CD14-positive monocyte (primary cell): ENCODE measurements at regions of chr7 and their contacts with region 1.

Region 1: DNA sequence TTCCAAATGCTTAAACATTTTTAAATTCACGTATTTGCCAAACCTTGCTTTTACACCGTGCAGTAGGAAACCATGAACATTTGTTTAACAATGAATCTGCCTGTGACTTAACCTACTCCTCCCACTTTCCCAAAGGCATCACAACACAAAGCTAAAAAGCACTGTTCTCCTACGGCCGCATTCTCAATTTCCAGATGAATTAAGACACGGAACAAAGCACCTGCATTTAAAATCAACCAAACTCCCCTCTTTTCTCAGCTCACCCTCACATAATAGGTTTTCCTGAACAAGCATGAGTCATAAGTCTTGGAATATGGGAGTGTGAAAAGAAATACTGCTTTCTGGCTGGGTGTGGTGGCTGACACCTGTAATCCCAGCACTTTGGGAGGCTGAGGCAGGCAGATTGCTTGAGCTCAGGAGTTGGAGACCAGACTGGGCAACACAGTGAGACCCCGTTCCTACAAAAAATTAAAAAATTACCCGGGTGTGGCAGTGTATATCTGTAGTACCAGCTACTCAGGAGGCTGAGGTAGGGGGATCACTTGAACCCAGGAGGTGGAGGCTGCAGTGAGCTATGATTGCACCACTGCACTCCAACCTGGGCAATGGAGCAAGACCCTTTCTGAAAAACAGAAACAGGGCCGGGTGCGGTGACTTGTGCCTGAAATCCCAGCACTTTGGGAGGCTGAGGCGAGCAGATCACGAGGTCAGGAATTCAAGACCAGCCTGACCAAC is 51.7 kb upstream of the CYTH3 start:
- DNase-seq: no peak
- H3K4me3 ChIP-seq: no peak overlapping the region
- H3K4me3 Mint-ChIP-seq: no peak overlapping the region
- H3K27ac ChIP-seq: no peak overlapping the region
- H3K27ac Mint-ChIP-seq: no peak overlapping the region
- H3K4me1 ChIP-seq: peaks cover 0 to 8% of the 10 kb centered on the region in 2 donors
- H3K4me1 Mint-ChIP-seq: peaks cover 15% of the 10 kb centered on the region
- H3K27me3 ChIP-seq: no peaks in the 10 kb centered on the region
- H3K27me3 Mint-ChIP-seq: peaks cover 0 to 5% (median 2%) of the 10 kb centered on the region in 3 donors
- CTCF ChIP-seq: no peak

Region 2: DNA sequence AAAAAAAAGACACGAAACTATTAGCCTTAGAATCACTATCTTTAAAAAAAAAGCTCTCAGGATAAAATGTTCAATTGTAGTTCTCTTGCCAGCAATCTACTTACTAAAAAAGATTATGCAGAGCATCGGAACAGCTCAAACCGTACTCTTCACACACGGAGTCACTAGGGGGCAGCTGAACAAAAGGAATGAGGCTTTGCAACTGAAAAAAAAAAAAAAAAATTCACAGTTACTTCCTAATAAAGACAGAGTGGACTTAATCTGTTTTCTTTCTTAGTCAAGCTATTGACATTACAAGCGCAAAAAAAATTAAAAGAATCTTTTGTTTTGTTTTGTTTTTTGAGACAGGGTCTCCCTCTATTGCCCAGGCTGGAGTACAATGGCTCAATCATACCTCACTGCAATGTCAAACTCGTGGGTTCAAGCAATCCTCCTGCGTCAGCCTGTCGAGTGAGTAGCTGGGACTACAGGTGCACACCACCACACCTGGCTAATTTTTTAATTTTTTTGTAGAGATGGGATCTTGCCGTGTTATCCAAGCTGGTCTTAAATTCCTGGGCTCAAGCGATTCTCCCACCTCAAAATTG is 326.8 kb before region 1 on chr7:
- intact Hi-C with region 1: loop called (anchors 5 to 10 kb)
- DNase-seq: peak; percentile 42 to 56 (median 54)
- H3K4me3 ChIP-seq: no peak overlapping the region
- H3K4me3 Mint-ChIP-seq: no peak overlapping the region
- H3K27ac ChIP-seq: no peak overlapping the region
- H3K27ac Mint-ChIP-seq: peak overlapping the region in 2 of 7 donors; percentile 20 to 35
- H3K4me1 ChIP-seq: no peaks in the 10 kb centered on the region
- H3K4me1 Mint-ChIP-seq: no peaks in the 10 kb centered on the region
- H3K27me3 ChIP-seq: no peaks in the 10 kb centered on the region
- H3K27me3 Mint-ChIP-seq: no peaks in the 10 kb centered on the region
- CTCF ChIP-seq: peak; percentile 70

Region 3: DNA sequence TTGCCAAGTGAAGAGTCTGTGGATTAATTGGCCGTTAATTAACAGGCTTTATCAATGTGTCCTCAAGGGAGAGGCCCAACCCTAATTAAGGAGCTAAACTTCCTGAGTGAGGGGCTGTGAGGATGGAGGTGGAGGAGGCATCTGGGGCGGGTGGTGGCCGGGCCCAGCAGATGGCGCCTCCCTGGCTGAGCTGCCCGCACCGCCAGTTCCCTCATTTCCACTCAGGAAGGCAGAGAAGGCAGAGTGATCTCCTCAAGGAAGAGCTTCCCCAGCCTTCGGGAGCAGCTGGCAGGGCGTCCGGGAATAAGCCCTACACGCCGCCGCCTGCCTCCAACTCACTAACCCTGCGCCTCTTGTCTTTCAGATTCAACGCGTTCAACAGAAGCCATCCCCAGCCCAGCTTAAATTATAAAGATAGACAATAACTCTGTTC is 163.9 kb before region 1 on chr7:
- intact Hi-C with region 1: loop called in 1 of 2 experiments (anchors 10 kb)
- DNase-seq: no peak
- H3K4me3 ChIP-seq: no peak overlapping the region
- H3K4me3 Mint-ChIP-seq: no peak overlapping the region
- H3K27ac ChIP-seq: no peak overlapping the region
- H3K27ac Mint-ChIP-seq: no peak overlapping the region
- H3K4me1 ChIP-seq: no peaks in the 10 kb centered on the region
- H3K4me1 Mint-ChIP-seq: no peaks in the 10 kb centered on the region
- H3K27me3 ChIP-seq: no peaks in the 10 kb centered on the region
- H3K27me3 Mint-ChIP-seq: no peaks in the 10 kb centered on the region
- CTCF ChIP-seq: peak; percentile 16